SK-N-SH (cell line): ENCODE measurements at regions of chr1 and their contacts with region 1.

Region 1: DNA sequence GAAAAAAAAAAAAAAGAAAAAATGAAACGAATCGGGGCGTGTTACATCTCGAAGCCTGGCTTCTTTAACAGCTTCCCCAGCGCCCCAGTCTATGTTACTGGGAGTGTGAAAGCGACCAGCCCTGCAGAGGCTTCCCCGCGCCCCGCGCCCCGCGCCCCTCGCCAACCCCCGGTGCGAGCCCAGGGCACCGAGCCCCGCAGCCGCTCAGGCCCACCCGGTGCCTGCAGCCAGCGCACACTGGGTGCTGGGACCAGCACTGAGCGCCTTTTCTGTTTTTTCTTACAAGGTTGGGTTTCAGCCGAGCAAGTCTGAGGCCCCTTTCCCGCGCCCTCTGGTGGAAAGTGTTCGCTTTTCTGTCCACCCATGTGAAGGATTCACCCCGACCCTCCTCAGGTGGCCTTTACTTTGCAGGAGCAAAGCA is 42.1 kb upstream of the ZNF496 start:
- DNase-seq: peak; percentile 38
- H3K4me3 ChIP-seq: no peak overlapping the region
- H3K27ac ChIP-seq: no peak overlapping the region
- H3K4me1 ChIP-seq: peaks cover 0 to 4% of the 10 kb centered on the region in 2 experiments; a peak in 1 of 4 replicates
- H3K27me3 ChIP-seq: no peaks in the 10 kb centered on the region
- CTCF ChIP-seq: peak; percentile 26
- EP300 ChIP-seq: no peak
- RAD21 ChIP-seq: no peak

Region 2: GRCh38 chr1:247360991-247361731 is 12.6 kb before region 1 on chr1:
- CTCF ChIA-PET with region 1: interaction called, 23 read pairs
- POLR2A ChIA-PET with region 1: no interaction called
- DNase-seq: no peak
- H3K4me3 ChIP-seq: no peak overlapping the region
- H3K27ac ChIP-seq: no peak overlapping the region
- H3K4me1 ChIP-seq: no peaks in the 10 kb centered on the region
- H3K27me3 ChIP-seq: no peaks in the 10 kb centered on the region
- CTCF ChIP-seq: no peak
- EP300 ChIP-seq: no peak
- RAD21 ChIP-seq: no peak

Region 3: DNA sequence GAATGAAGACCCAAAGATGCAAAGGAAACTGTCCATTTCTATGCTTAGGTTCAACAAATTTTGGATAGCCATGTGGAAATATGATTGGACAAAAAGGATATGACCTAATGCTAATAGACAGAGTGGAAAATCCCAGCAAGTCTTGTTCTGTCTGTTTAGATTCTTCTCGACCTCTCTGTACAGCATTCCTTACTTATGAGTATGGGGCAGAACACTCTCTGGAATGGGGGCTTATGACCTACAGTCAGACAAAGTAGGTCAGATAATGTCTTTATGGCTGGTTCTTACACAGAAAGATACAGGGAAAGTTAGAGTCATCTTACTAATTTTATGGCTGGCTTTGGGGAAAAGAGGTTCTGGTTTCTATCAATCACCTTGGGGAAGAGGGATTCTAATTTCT is 178.0 kb after region 1 on chr1:
- CTCF ChIA-PET with region 1: no interaction called
- POLR2A ChIA-PET with region 1: no interaction called
- DNase-seq: no peak
- H3K4me3 ChIP-seq: no peak overlapping the region
- H3K27ac ChIP-seq: peak overlapping the region in 1 of 2 experiments; percentile 66; a peak in 2 of 4 replicates
- H3K4me1 ChIP-seq: no peaks in the 10 kb centered on the region
- H3K27me3 ChIP-seq: no peaks in the 10 kb centered on the region
- CTCF ChIP-seq: no peak
- EP300 ChIP-seq: 0 out of 4 replicates have a peak, but pooled peaks of 1 of the 2 experiments have one; percentile 26
- RAD21 ChIP-seq: no peak

Region 4: GRCh38 chr1:247639381-247639981 is 265.8 kb after region 1 on chr1:
- CTCF ChIA-PET with region 1: no interaction called
- POLR2A ChIA-PET with region 1: no interaction called
- DNase-seq: peak; percentile 65
- H3K4me3 ChIP-seq: peak overlapping the region in 1 of 2 experiments; percentile 26; a peak in 1 of 4 replicates
- H3K27ac ChIP-seq: no peak overlapping the region
- H3K4me1 ChIP-seq: no peaks in the 10 kb centered on the region
- H3K27me3 ChIP-seq: no peaks in the 10 kb centered on the region; the same call in 1 of the 2 replicates
- CTCF ChIP-seq: no peak
- EP300 ChIP-seq: no peak
- RAD21 ChIP-seq: no peak